ENCODE measurements at regions of chr3 and their contacts with region 1.

Region 1: GRCh38 chr3:8111069-8111798 is 390.4 kb upstream of the LMCD1 start:
- DNase-seq: peak; percentile 91
- H3K4me3 ChIP-seq: peak overlapping the region in 2 of 3 experiments; percentile 31 to 43
- H3K27ac ChIP-seq: peak overlapping the region; percentile 37
- H3K4me1 ChIP-seq: peaks cover 6% of the 10 kb centered on the region
- H3K27me3 ChIP-seq: no peaks in the 10 kb centered on the region
- CTCF ChIP-seq: peak; percentile 67 to 82
- POLR2A ChIP-seq: no peak

Region 2: GRCh38 chr3:6994081-6994668 is 1117.1 kb before region 1 on chr3:
- CTCF ChIA-PET with region 1: interaction called, 10 read pairs
- POLR2A ChIA-PET with region 1: no interaction called
- dilution Hi-C with region 1: no loop called
- intact Hi-C with region 1: loop called (anchors 1 kb)
- DNase-seq: peak; percentile 57
- H3K4me3 ChIP-seq: no peak overlapping the region
- H3K27ac ChIP-seq: no peak overlapping the region
- H3K4me1 ChIP-seq: no peaks in the 10 kb centered on the region
- H3K27me3 ChIP-seq: no peaks in the 10 kb centered on the region
- CTCF ChIP-seq: peak; percentile 9 to 23
- POLR2A ChIP-seq: no peak

Region 3: GRCh38 chr3:7309641-7310102 is 801.6 kb before region 1 on chr3:
- CTCF ChIA-PET with region 1: interaction called, 3 read pairs
- POLR2A ChIA-PET with region 1: no interaction called
- dilution Hi-C with region 1: no loop called
- intact Hi-C with region 1: loop called (anchors 2 kb)
- DNase-seq: peak; percentile 98
- H3K4me3 ChIP-seq: no peak overlapping the region
- H3K27ac ChIP-seq: peak overlapping the region; percentile 96
- H3K4me1 ChIP-seq: peaks cover 55% of the 10 kb centered on the region
- H3K27me3 ChIP-seq: no peaks in the 10 kb centered on the region
- CTCF ChIP-seq: no peak
- POLR2A ChIP-seq: no peak

Region 4: DNA sequence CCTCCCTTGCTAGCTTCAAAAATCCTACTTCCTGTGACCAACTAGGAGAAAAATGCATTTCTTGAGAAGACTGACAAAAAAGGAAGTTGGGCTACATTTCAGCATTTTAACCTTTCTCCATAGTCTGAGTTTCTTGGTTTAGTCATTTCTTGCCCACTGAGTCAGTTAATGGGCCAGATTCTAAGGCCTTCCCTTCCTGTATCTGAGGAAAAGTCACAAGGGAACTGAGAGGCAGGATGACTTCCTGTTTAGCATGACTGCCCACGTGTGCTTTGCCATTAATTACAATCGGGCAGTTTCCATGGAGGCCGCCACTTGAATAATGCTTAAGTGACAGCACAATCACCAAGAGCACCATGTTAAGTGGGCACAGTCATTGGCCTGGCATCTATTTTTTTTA is 404.0 kb before region 1 on chr3:
- CTCF ChIA-PET with region 1: interaction called, 5 read pairs
- POLR2A ChIA-PET with region 1: no interaction called
- dilution Hi-C with region 1: no loop called
- intact Hi-C with region 1: loop called (anchors 1 kb)
- DNase-seq: peak; percentile 74
- H3K4me3 ChIP-seq: no peak overlapping the region
- H3K27ac ChIP-seq: peak overlapping the region; percentile 95
- H3K4me1 ChIP-seq: peaks cover 55% of the 10 kb centered on the region
- H3K27me3 ChIP-seq: no peaks in the 10 kb centered on the region
- CTCF ChIP-seq: no peak
- POLR2A ChIP-seq: peak; percentile 22

Region 5: DNA sequence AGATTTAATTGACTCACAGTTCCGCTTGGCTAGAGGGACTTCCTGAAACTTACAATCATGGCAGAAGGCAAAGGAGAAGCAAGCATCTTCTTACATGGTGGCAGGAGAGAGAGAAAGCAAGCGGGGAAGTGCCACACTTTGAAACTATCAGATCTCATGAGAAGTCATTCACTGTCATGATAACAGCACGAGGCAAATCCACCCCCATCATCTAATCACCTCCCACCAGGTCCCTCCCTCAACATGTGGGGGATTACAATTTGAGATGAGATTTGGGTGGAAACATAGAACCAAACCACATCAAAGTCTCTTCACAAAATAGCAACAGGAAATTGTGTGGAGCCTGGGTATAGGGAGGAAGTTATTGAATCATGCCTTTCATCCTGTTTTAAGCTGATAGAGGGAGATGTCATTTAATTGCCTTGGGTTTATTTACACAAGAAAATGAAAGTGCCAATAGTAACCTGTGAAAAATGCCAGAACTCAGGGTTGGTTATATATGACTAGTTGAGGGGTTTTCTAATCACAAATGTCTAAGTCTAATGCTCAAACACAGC is 234.4 kb before region 1 on chr3:
- CTCF ChIA-PET with region 1: no interaction called
- POLR2A ChIA-PET with region 1: no interaction called
- dilution Hi-C with region 1: no loop called
- intact Hi-C with region 1: loop called (anchors 1 kb)
- DNase-seq: peak; percentile 92
- H3K4me3 ChIP-seq: peak overlapping the region in 1 of 3 experiments; percentile 1
- H3K27ac ChIP-seq: peak overlapping the region; percentile 76
- H3K4me1 ChIP-seq: peaks cover 40% of the 10 kb centered on the region
- H3K27me3 ChIP-seq: no peaks in the 10 kb centered on the region
- CTCF ChIP-seq: no peak
- POLR2A ChIP-seq: peak; percentile 41

Region 6: GRCh38 chr3:8128686-8129085 is 17.5 kb after region 1 on chr3:
- CTCF ChIA-PET with region 1: no interaction called
- POLR2A ChIA-PET with region 1: no interaction called
- dilution Hi-C with region 1: no loop called
- intact Hi-C with region 1: no loop called
- DNase-seq: no peak
- H3K4me3 ChIP-seq: no peak overlapping the region
- H3K27ac ChIP-seq: no peak overlapping the region
- H3K4me1 ChIP-seq: no peaks in the 10 kb centered on the region
- H3K27me3 ChIP-seq: no peaks in the 10 kb centered on the region
- CTCF ChIP-seq: no peak
- POLR2A ChIP-seq: no peak

Measured in endothelial cell of umbilical vein (primary cell).